ENCODE measurements at regions of chr7 and their contacts with region 1.

Region 1: GRCh38 chr7:7566651-7567611 is at the start of gene MIOS:
- DNase-seq: peak; percentile 95
- ATAC-seq: peak; percentile 97
- total RNA-seq, gene MIOS: 24.9 TPM

Region 2: DNA sequence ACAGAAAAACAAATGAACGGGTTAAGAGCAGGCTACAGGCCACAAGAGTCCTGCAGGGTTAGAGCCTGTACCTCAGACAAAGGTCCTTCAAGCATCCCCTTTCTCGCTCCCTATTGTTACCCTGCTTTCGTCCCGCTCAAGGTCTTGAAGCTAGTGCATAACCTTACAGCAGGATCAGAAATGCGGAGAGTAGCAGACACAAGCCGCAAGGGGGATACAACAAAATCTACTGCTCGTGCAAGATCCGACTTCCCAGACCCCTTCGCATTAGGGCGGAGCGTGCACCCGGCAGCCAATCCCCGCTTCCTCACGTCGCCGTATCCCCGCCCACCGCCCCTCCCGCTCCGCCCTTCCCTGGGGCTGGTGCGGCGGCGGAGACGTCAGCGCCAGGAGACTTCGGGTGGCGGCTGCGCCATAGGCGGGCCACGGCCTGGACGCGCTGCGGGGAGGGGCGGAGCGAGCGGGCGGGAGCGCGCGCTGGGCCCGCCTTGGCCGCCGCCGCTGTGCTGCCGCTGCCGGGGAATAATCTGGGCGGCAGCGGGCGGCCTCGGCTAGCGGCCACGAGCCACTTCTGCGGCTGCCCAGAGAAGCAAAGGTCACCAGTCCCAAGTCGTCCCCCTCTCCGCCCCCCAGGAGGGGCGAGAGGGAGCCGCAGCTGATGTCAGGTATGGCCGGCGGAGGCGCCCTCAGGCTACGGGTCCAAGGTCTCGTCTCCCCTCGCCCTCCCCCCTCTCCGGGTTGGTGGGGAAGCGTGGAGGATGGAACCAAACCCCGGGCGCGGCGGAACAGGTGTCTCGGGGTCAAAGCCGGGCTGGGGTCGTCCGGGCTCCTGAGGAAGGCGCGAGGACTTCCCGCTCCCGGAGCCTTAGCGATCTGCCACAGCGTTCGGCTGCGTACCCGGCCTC is 384.5 kb before region 1 on chr7 and contains the start of gene C1GALT1:
- intact Hi-C with region 1: loop called (anchors 10 kb)
- DNase-seq: peak; percentile 99
- ATAC-seq: peak; percentile 99
- total RNA-seq, gene C1GALT1: 19.6 TPM

Region 3: GRCh38 chr7:7640221-7641128 is 73.5 kb after region 1 on chr7 and contains the start of gene UMAD1:
- intact Hi-C with region 1: loop called (anchors 2 kb)
- DNase-seq: peak; percentile 99
- ATAC-seq: peak; percentile 100
- total RNA-seq, gene UMAD1: 13.3 TPM

Region 4: GRCh38 chr7:7968543-7969305 is 401.8 kb after region 1 on chr7 and contains the start of gene GLCCI1:
- intact Hi-C with region 1: loop called (anchors 10 kb)
- DNase-seq: peak; percentile 97
- ATAC-seq: peak; percentile 99
- total RNA-seq, gene GLCCI1: 5.7 TPM